ENCODE measurements at regions of chr15 and their contacts with region 1.

Region 1: GRCh38 chr15:66504563-66505429 is at the starts of genes RPL4 and ZWILCH:
- DNase-seq: peak; percentile 83
- H3K4me3 Mint-ChIP-seq: peak within 1 kb of the TSS; percentile 83
- H3K27ac Mint-ChIP-seq: peak within 1 kb of the TSS; percentile 94
- H3K4me1 Mint-ChIP-seq: peaks cover 10% of the 10 kb centered on the region
- H3K27me3 Mint-ChIP-seq: no peaks in the 10 kb centered on the region
- CTCF ChIP-seq: no peak
- total RNA-seq, gene RPL4: 5,336 and 5,631 TPM in 2 replicates
- total RNA-seq, gene ZWILCH: 20.8 and 27.4 TPM in 2 replicates

Region 2: DNA sequence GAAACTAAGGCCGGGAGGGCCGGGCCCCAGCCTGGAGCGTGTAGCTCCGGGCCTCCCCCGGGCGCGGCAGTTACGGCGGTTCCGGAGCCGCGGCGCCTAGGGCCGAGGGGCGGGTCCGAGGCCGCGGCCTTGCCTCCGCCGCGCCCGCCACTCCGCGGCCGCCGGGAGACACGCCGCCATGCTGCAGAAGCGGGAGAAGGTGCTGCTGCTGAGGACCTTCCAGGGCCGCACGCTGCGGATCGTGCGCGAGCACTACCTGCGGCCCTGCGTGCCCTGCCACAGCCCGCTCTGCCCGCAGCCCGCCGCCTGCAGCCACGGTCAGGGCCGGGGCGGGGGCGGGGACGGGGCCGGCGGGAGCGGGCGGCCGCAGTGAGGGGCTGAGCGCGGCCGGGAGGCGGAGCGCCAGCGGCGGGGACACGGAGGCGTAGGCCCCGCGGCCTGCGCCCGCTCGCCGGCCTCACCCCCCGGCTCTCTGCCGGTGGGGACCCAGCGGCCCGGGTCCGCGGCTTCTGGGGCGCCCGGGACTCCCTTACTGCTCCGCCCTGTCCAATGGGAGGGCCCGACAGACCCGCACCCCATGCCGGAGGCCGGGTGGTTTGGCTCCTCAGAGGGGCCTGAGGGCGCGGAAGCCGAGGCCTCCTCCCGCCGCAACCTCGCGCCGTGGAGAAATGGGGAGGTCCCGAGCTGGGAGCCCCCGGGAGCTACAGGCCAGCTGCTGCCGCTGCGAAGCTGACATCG is 211.2 kb before region 1 on chr15 and contains the start of gene DIS3L:
- CTCF ChIA-PET with region 1: no interaction called
- POLR2A ChIA-PET with region 1: interaction called, 14 read pairs
- intact Hi-C with region 1: no loop called
- DNase-seq: peak; percentile 70
- H3K4me3 Mint-ChIP-seq: peak within 1 kb of the TSS; percentile 83
- H3K27ac Mint-ChIP-seq: peak within 1 kb of the TSS; percentile 75
- H3K4me1 Mint-ChIP-seq: peaks cover 11% of the 10 kb centered on the region
- H3K27me3 Mint-ChIP-seq: no peaks in the 10 kb centered on the region
- CTCF ChIP-seq: no peak
- total RNA-seq, gene DIS3L: 35.6 and 42.8 TPM in 2 replicates

Region 3: GRCh38 chr15:66459818-66460615 is 44.8 kb before region 1 on chr15:
- CTCF ChIA-PET with region 1: no interaction called
- POLR2A ChIA-PET with region 1: interaction called, 10 read pairs
- intact Hi-C with region 1: no loop called
- DNase-seq: peak; percentile 52
- H3K4me3 Mint-ChIP-seq: peak overlapping the region; percentile 16
- H3K27ac Mint-ChIP-seq: peak overlapping the region; percentile 83
- H3K4me1 Mint-ChIP-seq: peaks cover 25% of the 10 kb centered on the region
- H3K27me3 Mint-ChIP-seq: no peaks in the 10 kb centered on the region
- CTCF ChIP-seq: no peak

Region 4: GRCh38 chr15:66515901-66516322 is 11.1 kb after region 1 on chr15:
- CTCF ChIA-PET with region 1: interaction called, 4 read pairs
- POLR2A ChIA-PET with region 1: interaction called, 12 read pairs
- intact Hi-C with region 1: no loop called
- DNase-seq: no peak
- H3K4me3 Mint-ChIP-seq: no peak overlapping the region
- H3K27ac Mint-ChIP-seq: no peak overlapping the region
- H3K4me1 Mint-ChIP-seq: no peaks in the 10 kb centered on the region
- H3K27me3 Mint-ChIP-seq: no peaks in the 10 kb centered on the region
- CTCF ChIP-seq: no peak

Region 5: DNA sequence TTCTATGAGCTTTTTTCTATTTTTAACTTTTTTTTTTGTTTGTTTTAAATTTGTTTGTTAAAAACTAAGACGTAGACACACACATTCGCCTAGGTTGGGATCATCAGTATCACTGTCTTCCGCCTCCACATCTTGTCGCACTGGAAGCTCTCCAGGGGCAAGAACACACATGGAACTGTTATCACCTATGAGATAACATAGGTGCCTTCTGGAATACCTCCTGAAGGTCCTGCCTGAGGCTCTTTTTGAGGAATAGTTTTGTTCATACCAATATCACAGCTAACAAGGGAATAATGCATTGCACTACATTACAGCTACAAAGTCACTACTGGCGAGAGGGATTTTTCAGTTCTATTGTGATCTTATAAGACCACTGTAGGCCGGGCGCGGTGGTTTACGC is 30.2 kb after region 1 on chr15:
- CTCF ChIA-PET with region 1: no interaction called
- POLR2A ChIA-PET with region 1: interaction called, 14 read pairs
- intact Hi-C with region 1: no loop called
- DNase-seq: no peak
- H3K4me3 Mint-ChIP-seq: no peak overlapping the region
- H3K27ac Mint-ChIP-seq: no peak overlapping the region
- H3K4me1 Mint-ChIP-seq: no peaks in the 10 kb centered on the region
- H3K27me3 Mint-ChIP-seq: no peaks in the 10 kb centered on the region
- CTCF ChIP-seq: no peak

Region 6: DNA sequence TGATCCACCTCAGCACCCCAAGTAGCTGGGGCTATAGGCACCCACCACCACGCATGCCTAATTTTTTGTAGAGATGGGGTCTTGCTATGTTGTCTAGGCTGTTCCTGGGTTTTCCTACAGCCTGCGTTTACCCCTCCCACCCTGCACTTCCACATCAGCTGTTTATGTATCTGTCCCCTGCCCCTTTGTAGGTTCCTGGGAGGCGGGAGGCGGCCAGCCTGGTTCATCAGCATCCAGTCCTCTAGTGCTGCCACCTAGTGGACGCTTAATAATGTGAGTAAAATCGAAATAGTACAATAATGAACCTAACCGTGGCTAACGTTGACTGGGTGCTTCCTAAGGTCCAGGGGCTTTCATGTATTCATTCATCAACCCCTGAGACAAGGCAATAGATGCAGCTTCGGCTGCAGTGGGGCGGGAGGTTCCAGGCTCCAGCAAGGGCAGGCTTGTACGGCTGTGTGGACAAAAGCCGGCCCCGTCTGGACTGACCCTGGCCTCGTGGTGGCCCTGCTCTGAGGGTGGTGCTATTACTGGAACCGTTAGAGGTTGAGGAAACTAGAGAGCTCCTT is 62.3 kb after region 1 on chr15:
- CTCF ChIA-PET with region 1: interaction called, 3 read pairs
- POLR2A ChIA-PET with region 1: interaction called, 3 read pairs
- intact Hi-C with region 1: loop called (anchors 2 kb)
- DNase-seq: peak; percentile 75
- H3K4me3 Mint-ChIP-seq: no peak overlapping the region
- H3K27ac Mint-ChIP-seq: no peak overlapping the region
- H3K4me1 Mint-ChIP-seq: peaks cover 12% of the 10 kb centered on the region
- H3K27me3 Mint-ChIP-seq: no peaks in the 10 kb centered on the region
- CTCF ChIP-seq: peak; percentile 48

Region 7: GRCh38 chr15:66580643-66581042 is 75.8 kb after region 1 on chr15:
- CTCF ChIA-PET with region 1: no interaction called
- POLR2A ChIA-PET with region 1: no interaction called
- intact Hi-C with region 1: no loop called
- DNase-seq: no peak
- H3K4me3 Mint-ChIP-seq: no peak overlapping the region
- H3K27ac Mint-ChIP-seq: no peak overlapping the region
- H3K4me1 Mint-ChIP-seq: no peaks in the 10 kb centered on the region
- H3K27me3 Mint-ChIP-seq: no peaks in the 10 kb centered on the region
- CTCF ChIP-seq: no peak